Left ventricle myocardium inferior (tissue), 1 donor: ENCODE measurements at regions of chr18 and their contacts with region 1.

Region 1: GRCh38 chr18:12659904-12660605 is 2.1 kb upstream of the SPIRE1 start:
- DNase-seq: no peak
- H3K4me3 ChIP-seq: no peak overlapping the region
- H3K27ac ChIP-seq: no peak overlapping the region
- H3K4me1 ChIP-seq: peaks cover 32% of the 10 kb centered on the region
- H3K27me3 ChIP-seq: no peaks in the 10 kb centered on the region
- CTCF ChIP-seq: peak; percentile 96

Region 2: DNA sequence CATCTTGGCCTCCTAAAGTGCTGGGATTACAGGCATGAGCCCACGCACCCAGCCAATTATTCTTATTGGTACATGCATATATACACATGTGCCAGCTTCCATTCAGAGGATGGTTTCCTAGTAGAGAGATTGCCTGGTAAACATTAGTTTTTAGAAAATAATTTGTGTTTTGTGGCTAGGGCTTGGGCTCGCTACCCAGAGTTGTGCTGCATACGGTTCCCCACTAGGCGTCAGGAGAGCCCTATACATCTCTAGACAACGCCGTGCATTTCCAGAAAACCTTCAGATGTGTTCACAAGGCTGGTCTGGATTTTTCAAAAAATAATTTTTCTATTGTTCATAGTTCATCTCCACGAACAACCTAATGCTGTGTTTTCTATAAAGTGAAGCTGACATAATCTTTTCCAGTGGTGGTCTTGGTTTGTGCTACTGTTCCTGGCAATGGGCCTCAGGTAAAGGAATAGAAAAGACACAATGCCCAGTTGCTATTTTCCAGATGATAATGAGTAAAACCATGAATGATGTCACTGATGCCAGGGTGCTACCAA is 268.4 kb before region 1 on chr18:
- intact Hi-C with region 1: loop called (anchors 5 kb)
- DNase-seq: no peak
- H3K4me3 ChIP-seq: no peak overlapping the region
- H3K27ac ChIP-seq: no peak overlapping the region
- H3K4me1 ChIP-seq: no peaks in the 10 kb centered on the region
- H3K27me3 ChIP-seq: no peaks in the 10 kb centered on the region
- CTCF ChIP-seq: peak; percentile 95